ENCODE measurements at regions of chr10 and their contacts with region 1.

Region 1: GRCh38 chr10:22340362-22341189 is 4.7 kb upstream of the SPAG6 start:
- DNase-seq: peak; percentile 76 to 85
- ATAC-seq: peak; percentile 79 to 81
- H3K4me3 ChIP-seq: peak overlapping the region; percentile 73
- H3K27ac ChIP-seq: peak overlapping the region; percentile 92 to 99
- H3K4me1 ChIP-seq: peaks cover 15% of the 10 kb centered on the region; the same call in 1 of the 3 replicates
- CTCF ChIP-seq: 0 out of 3 replicates have a peak, but pooled peaks have one; percentile 2
- EP300 ChIP-seq: no peak
- POLR2A ChIP-seq: peak; percentile 40
- RAD21 ChIP-seq: no peak; a peak in 1 of 5 replicates

Region 2: DNA sequence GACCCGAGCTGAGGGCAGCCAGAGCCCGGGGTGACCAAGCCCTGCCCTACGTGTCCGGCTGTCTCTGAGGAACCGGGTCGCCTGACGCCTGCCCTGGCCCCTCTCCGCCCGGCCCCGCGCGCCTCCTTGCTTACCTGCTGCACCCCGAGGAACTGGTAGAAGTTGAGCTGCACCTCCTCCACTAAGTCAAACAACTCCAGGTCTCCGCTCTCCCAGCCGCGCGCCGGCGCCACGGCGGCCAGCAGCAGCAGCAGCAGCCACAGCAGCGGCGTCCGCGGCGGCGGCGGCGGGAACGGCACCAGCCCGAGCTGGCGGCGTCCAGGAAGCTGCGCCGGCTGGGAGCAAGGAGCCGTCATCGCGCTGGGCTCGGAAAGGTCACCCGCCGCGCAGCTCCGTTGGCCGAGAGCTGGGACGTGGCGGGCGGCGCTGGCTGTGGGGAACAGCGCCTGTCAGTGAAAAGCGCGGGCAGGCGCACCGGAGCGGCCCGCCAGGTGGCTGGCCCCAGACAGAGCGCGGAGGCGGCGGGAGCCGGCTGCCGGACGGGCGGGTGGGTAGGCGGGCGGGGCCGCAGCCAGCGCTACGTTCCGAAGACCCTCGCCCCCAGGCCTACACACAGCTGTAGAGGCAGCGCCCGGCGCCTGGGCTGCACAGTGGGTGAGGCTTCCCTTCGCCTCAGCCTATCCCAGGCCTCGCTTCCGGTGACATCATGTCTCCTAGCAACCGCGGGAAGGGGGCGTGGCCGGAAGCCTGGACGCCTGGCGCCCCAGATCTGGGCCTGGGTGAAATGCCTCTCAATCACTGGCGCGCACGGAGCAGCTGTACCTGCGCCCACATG is 337.3 kb before region 1 on chr10 and contains the start of gene DNAJC1:
- CTCF ChIA-PET with region 1: no interaction called
- POLR2A ChIA-PET with region 1: interaction called, 10 read pairs
- DNase-seq: peak; percentile 91 to 96
- ATAC-seq: peak; percentile 95 to 99
- H3K4me3 ChIP-seq: peak within 1 kb of the TSS; percentile 76
- H3K27ac ChIP-seq: peak within 1 kb of the TSS; percentile 77 to 91
- H3K4me1 ChIP-seq: peaks cover 11% of the 10 kb centered on the region; the same call in 1 of the 3 replicates
- CTCF ChIP-seq: no peak
- EP300 ChIP-seq: no peak
- POLR2A ChIP-seq: peak; percentile 70
- RAD21 ChIP-seq: no peak; a peak in 1 of 5 replicates
- polyA plus RNA-seq, gene DNAJC1: 29.8 and 34.2 TPM in 2 replicates

Region 3: DNA sequence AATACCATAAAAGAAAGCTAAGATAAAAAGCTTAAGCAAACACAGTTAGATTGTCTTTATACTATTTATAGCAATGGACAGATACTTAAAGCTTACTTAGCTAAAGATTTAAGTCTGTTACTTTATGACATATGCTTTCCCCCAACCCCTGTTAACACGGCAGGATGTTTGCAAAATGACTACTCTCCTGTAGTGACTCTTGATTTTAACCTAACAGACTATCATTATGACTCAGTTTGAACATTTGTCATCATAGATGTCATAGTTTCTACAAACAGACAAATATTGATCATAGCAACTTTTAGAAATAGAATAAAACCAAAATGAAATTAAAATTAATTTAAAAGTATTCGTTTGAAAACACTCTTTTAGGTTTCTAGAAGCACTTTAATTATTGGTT is 32.2 kb before region 1 on chr10:
- CTCF ChIA-PET with region 1: no interaction called
- POLR2A ChIA-PET with region 1: no interaction called
- DNase-seq: peak; percentile 46 to 60
- ATAC-seq: peak in 1 of 2 experiments; percentile 64; a peak in 2 of 6 replicates
- H3K4me3 ChIP-seq: no peak overlapping the region
- H3K27ac ChIP-seq: no peak overlapping the region
- H3K4me1 ChIP-seq: peaks cover 10% of the 10 kb centered on the region; the same call in 2 of the 3 replicates
- CTCF ChIP-seq: no peak
- EP300 ChIP-seq: no peak
- POLR2A ChIP-seq: no peak
- RAD21 ChIP-seq: no peak

Region 4: DNA sequence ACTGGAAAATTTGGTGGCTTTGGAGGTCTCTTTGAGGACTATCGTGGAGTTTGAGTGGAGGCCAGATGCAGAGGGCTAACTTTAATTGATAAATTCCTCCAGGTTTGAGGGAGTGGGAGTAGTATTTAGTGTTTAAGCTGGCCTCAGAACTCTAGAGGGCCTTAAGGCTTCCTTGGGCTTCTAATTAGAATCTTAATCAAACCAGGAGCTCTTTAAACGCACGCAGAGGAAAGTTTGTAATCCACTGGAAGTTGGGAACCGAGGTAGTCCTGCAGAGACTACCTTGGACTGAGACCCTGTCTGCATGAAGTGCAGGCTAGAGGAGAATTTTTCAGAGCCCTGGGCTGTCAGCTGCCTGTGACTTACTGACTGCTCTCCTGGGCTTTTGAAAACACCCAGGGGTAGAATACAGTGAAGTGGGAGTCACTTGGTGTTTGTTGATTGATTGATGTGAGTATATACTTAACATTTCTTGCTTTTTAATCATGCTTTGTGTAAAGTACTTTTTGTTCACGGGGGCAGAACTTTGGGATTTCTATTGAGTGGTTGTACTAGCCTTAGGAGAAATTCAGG is 10.6 kb after region 1 on chr10:
- CTCF ChIA-PET with region 1: no interaction called
- POLR2A ChIA-PET with region 1: interaction called, 14 read pairs
- DNase-seq: no peak
- ATAC-seq: no peak
- H3K4me3 ChIP-seq: no peak overlapping the region
- H3K27ac ChIP-seq: no peak overlapping the region
- H3K4me1 ChIP-seq: no peaks in the 10 kb centered on the region
- CTCF ChIP-seq: no peak
- EP300 ChIP-seq: no peak
- POLR2A ChIP-seq: no peak
- RAD21 ChIP-seq: no peak

Region 5: DNA sequence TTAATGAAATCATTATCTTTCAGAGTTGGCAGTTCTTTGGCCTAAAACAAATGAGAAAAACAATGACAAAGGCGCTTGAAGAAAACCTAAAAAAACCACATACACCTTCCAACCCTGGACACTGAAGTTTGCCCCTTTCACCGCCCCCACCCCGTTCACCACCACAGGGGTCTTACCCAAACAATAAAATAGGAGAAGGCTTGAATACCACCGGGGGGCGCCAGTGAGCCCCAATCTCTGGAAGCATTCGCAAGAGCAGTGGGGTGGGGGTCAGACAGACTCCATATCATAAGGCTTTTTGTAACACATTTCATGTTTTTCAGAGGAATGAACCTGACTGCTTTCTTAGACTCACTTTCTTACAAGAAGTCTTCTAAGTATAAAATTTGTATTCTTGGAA is 210.2 kb after region 1 on chr10:
- CTCF ChIA-PET with region 1: no interaction called
- POLR2A ChIA-PET with region 1: interaction called, 12 read pairs
- DNase-seq: peak; percentile 9 to 41
- ATAC-seq: peak in 1 of 2 experiments; percentile 54; a peak in 2 of 6 replicates
- H3K4me3 ChIP-seq: no peak overlapping the region
- H3K27ac ChIP-seq: no peak overlapping the region
- H3K4me1 ChIP-seq: no peaks in the 10 kb centered on the region
- CTCF ChIP-seq: peak; percentile 52
- EP300 ChIP-seq: no peak
- POLR2A ChIP-seq: no peak
- RAD21 ChIP-seq: peak; percentile 41 to 47

Measured in A549 (cell line).